MCF 10A (cell line): ENCODE measurements at regions of chr18 and their contacts with region 1.

Region 1: GRCh38 chr18:3771121-3771971 is 321.4 kb downstream of the TGIF1 start:
- DNase-seq: peak; percentile 85
- H3K4me3 Mint-ChIP-seq: peak overlapping the region; percentile 38
- H3K27ac Mint-ChIP-seq: peak overlapping the region; percentile 15
- H3K4me1 Mint-ChIP-seq: peaks cover 11% of the 10 kb centered on the region
- H3K27me3 Mint-ChIP-seq: no peaks in the 10 kb centered on the region
- CTCF ChIP-seq: peak; percentile 93

Region 2: GRCh38 chr18:3217948-3218647 is 553.2 kb before region 1 on chr18:
- CTCF ChIA-PET with region 1: no interaction called
- POLR2A ChIA-PET with region 1: no interaction called
- intact Hi-C with region 1: no loop called
- DNase-seq: peak; percentile 36
- H3K4me3 Mint-ChIP-seq: no peak overlapping the region
- H3K27ac Mint-ChIP-seq: peak overlapping the region; percentile 32
- H3K4me1 Mint-ChIP-seq: peaks cover 7% of the 10 kb centered on the region
- H3K27me3 Mint-ChIP-seq: no peaks in the 10 kb centered on the region
- CTCF ChIP-seq: no peak

Region 3: GRCh38 chr18:3753106-3753505 is 18.2 kb before region 1 on chr18:
- CTCF ChIA-PET with region 1: interaction called, 19 read pairs
- POLR2A ChIA-PET with region 1: no interaction called
- intact Hi-C with region 1: no loop called
- DNase-seq: no peak
- H3K4me3 Mint-ChIP-seq: no peak overlapping the region
- H3K27ac Mint-ChIP-seq: no peak overlapping the region
- H3K4me1 Mint-ChIP-seq: no peaks in the 10 kb centered on the region
- H3K27me3 Mint-ChIP-seq: no peaks in the 10 kb centered on the region
- CTCF ChIP-seq: no peak

Region 4: GRCh38 chr18:3794537-3795348 is 23.4 kb after region 1 on chr18:
- CTCF ChIA-PET with region 1: interaction called, 17 read pairs
- POLR2A ChIA-PET with region 1: no interaction called
- intact Hi-C with region 1: no loop called
- DNase-seq: peak; percentile 90
- H3K4me3 Mint-ChIP-seq: peak overlapping the region; percentile 32
- H3K27ac Mint-ChIP-seq: peak overlapping the region; percentile 73
- H3K4me1 Mint-ChIP-seq: peaks cover 22% of the 10 kb centered on the region
- H3K27me3 Mint-ChIP-seq: no peaks in the 10 kb centered on the region
- CTCF ChIP-seq: no peak

Region 5: GRCh38 chr18:3857544-3857943 is 86.2 kb after region 1 on chr18:
- CTCF ChIA-PET with region 1: interaction called, 26 read pairs
- POLR2A ChIA-PET with region 1: no interaction called
- intact Hi-C with region 1: no loop called
- DNase-seq: no peak
- H3K4me3 Mint-ChIP-seq: no peak overlapping the region
- H3K27ac Mint-ChIP-seq: no peak overlapping the region
- H3K4me1 Mint-ChIP-seq: no peaks in the 10 kb centered on the region
- H3K27me3 Mint-ChIP-seq: no peaks in the 10 kb centered on the region
- CTCF ChIP-seq: no peak

Region 6: GRCh38 chr18:3877678-3878077 is 106.3 kb after region 1 on chr18:
- CTCF ChIA-PET with region 1: interaction called, 20 read pairs
- POLR2A ChIA-PET with region 1: no interaction called
- intact Hi-C with region 1: no loop called
- DNase-seq: peak; percentile 15
- H3K4me3 Mint-ChIP-seq: no peak overlapping the region
- H3K27ac Mint-ChIP-seq: no peak overlapping the region
- H3K4me1 Mint-ChIP-seq: no peaks in the 10 kb centered on the region
- H3K27me3 Mint-ChIP-seq: peaks cover 20% of the 10 kb centered on the region
- CTCF ChIP-seq: no peak

Region 7: GRCh38 chr18:4063545-4063944 is 292.2 kb after region 1 on chr18:
- CTCF ChIA-PET with region 1: interaction called, 10 read pairs
- POLR2A ChIA-PET with region 1: no interaction called
- intact Hi-C with region 1: no loop called
- DNase-seq: no peak
- H3K4me3 Mint-ChIP-seq: no peak overlapping the region
- H3K27ac Mint-ChIP-seq: no peak overlapping the region
- H3K4me1 Mint-ChIP-seq: no peaks in the 10 kb centered on the region
- H3K27me3 Mint-ChIP-seq: no peaks in the 10 kb centered on the region
- CTCF ChIP-seq: no peak